HCT116 (cell line): ENCODE measurements at regions of chr1 and their contacts with region 1.

Region 1: GRCh38 chr1:203702130-203702577 is 62.8 kb upstream of the LAX1 start:
- DNase-seq: peak; percentile 35
- ATAC-seq: peak; percentile 82
- H3K4me3 ChIP-seq: no peak overlapping the region
- H3K27ac ChIP-seq: no peak overlapping the region
- H3K4me1 ChIP-seq: peaks cover 0 to 19% of the 10 kb centered on the region in 2 experiments; a peak in 1 of 4 replicates
- H3K27me3 ChIP-seq: no peaks in the 10 kb centered on the region
- CTCF ChIP-seq: peak; percentile 75 to 98 (median 91)
- POLR2A ChIP-seq: no peak
- RAD21 ChIP-seq: peak; percentile 98

Region 2: GRCh38 chr1:203340112-203340804 is 361.9 kb before region 1 on chr1:
- CTCF ChIA-PET with region 1: interaction called, 9 read pairs
- POLR2A ChIA-PET with region 1: no interaction called
- RAD21 ChIA-PET with region 1: no interaction called
- intact Hi-C with region 1: loop called (anchors 2 kb)
- DNase-seq: peak; percentile 76
- ATAC-seq: peak; percentile 76
- H3K4me3 ChIP-seq: no peak overlapping the region
- H3K27ac ChIP-seq: no peak overlapping the region
- H3K4me1 ChIP-seq: peaks cover 0 to 6% of the 10 kb centered on the region in 2 experiments; a peak in 2 of 4 replicates
- H3K27me3 ChIP-seq: peaks cover 15% of the 10 kb centered on the region; the same call in 1 of the 2 replicates
- CTCF ChIP-seq: peak; percentile 88 to 96 (median 94)
- POLR2A ChIP-seq: no peak
- RAD21 ChIP-seq: peak; percentile 95

Region 3: GRCh38 chr1:203504397-203505250 is 197.5 kb before region 1 on chr1:
- CTCF ChIA-PET with region 1: interaction called, 73 read pairs
- POLR2A ChIA-PET with region 1: interaction called, 6 read pairs
- RAD21 ChIA-PET with region 1: interaction called, 7 to 8 read pairs
- intact Hi-C with region 1: loop called (anchors 1 kb)
- DNase-seq: peak; percentile 70
- ATAC-seq: peak; percentile 98
- H3K4me3 ChIP-seq: no peak overlapping the region
- H3K27ac ChIP-seq: no peak overlapping the region
- H3K4me1 ChIP-seq: peaks cover 0 to 7% of the 10 kb centered on the region in 2 experiments; a peak in 1 of 4 replicates
- H3K27me3 ChIP-seq: peaks cover 13% of the 10 kb centered on the region; the same call in 1 of the 2 replicates
- CTCF ChIP-seq: peak; percentile 70 to 85 (median 83)
- POLR2A ChIP-seq: no peak
- RAD21 ChIP-seq: peak; percentile 86

Region 4: DNA sequence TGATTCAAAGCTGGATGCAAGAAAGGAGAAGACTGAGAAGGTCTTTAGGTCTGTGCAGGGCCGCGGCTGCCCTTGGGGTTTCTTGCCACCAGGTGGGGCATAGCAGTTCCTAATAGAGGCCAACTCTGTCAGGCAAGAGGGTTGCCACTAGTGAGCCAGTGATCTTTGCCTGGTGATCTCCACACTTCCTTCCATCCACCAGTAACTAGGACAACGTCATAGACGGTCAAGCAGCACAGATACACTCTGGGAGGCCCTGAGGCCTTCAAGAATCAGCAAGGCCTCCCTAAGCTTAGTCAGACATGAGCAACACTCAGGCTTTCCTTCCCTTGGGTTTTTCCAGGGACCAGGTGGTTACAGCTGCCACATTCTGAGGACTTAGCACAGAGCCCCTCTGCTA is 108.4 kb before region 1 on chr1:
- CTCF ChIA-PET with region 1: no interaction called
- POLR2A ChIA-PET with region 1: no interaction called
- RAD21 ChIA-PET with region 1: interaction called in 1 of 2 experiments, 6 read pairs
- intact Hi-C with region 1: loop called (anchors 2 kb)
- DNase-seq: peak; percentile 23
- ATAC-seq: peak; percentile 91
- H3K4me3 ChIP-seq: no peak overlapping the region
- H3K27ac ChIP-seq: no peak overlapping the region
- H3K4me1 ChIP-seq: peaks cover 0 to 6% of the 10 kb centered on the region in 2 experiments; a peak in 1 of 4 replicates
- H3K27me3 ChIP-seq: peaks cover 4% of the 10 kb centered on the region; the same call in 1 of the 2 replicates
- CTCF ChIP-seq: peak; percentile 23 to 66 (median 59); a peak in 5 of 6 replicates
- POLR2A ChIP-seq: no peak
- RAD21 ChIP-seq: peak; percentile 57

Region 5: DNA sequence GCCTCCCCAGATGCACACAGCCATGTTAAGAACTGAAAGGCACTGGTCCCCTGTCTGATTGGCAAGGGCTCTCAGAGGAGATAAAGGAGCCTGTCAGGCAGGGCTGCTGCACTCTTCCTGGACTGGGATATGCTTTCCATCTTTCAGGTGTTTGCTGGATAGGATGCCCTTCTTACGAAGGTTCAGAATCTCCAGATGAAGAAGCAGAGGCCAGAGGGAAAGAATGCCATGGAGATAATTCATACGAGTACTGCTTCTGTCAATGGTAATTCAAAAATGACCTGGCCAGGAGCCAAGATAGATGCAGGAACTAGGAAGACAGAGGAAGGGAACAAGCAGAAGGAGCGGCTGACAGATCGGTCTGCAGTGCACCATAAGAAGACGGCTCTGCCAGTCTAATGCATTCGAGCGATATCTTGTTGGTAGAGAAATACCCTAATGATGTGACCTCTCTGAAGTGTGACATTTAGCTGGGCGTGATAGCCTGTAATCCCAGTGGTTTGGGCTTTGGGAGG is 92.1 kb before region 1 on chr1:
- CTCF ChIA-PET with region 1: no interaction called
- POLR2A ChIA-PET with region 1: no interaction called
- RAD21 ChIA-PET with region 1: no interaction called
- intact Hi-C with region 1: loop called (anchors 5 kb)
- DNase-seq: no peak
- ATAC-seq: no peak
- H3K4me3 ChIP-seq: no peak overlapping the region
- H3K27ac ChIP-seq: no peak overlapping the region
- H3K4me1 ChIP-seq: peaks cover 4 to 10% of the 10 kb centered on the region in 2 experiments; a peak in 3 of 4 replicates
- H3K27me3 ChIP-seq: no peaks in the 10 kb centered on the region
- CTCF ChIP-seq: no peak; a peak in 1 of 6 replicates
- POLR2A ChIP-seq: no peak
- RAD21 ChIP-seq: no peak

Region 6: DNA sequence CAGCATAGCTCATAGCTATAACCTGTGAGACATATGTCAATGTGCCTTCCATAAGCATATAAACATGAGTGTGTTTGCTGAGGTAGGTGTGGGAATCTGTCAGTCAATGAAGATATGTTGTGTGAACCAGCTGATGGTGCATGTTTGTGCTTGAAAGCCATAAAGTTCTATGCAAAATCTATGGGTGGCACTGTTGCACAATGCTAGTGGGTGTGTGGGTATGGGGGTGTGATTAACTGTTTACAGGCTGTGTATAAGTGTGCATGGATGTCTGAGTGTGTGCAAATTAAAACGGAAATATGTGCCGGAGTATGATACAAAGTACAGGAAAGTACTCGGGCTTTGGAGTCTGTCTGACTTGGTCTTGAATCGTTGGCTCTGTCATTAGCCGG is 76.5 kb before region 1 on chr1:
- CTCF ChIA-PET with region 1: interaction called, 7 read pairs
- POLR2A ChIA-PET with region 1: no interaction called
- RAD21 ChIA-PET with region 1: interaction called, 4 to 16 read pairs
- intact Hi-C with region 1: no loop called
- DNase-seq: no peak
- ATAC-seq: peak; percentile 41
- H3K4me3 ChIP-seq: peak overlapping the region in 1 of 2 experiments; percentile 64; a peak in 2 of 4 replicates
- H3K27ac ChIP-seq: no peak overlapping the region
- H3K4me1 ChIP-seq: peaks cover 5 to 33% of the 10 kb centered on the region in 2 experiments; a peak in 3 of 4 replicates
- H3K27me3 ChIP-seq: no peaks in the 10 kb centered on the region
- CTCF ChIP-seq: peak in 2 of 3 experiments; percentile 37 to 61; a peak in 4 of 6 replicates
- POLR2A ChIP-seq: no peak
- RAD21 ChIP-seq: peak; percentile 88

Region 7: DNA sequence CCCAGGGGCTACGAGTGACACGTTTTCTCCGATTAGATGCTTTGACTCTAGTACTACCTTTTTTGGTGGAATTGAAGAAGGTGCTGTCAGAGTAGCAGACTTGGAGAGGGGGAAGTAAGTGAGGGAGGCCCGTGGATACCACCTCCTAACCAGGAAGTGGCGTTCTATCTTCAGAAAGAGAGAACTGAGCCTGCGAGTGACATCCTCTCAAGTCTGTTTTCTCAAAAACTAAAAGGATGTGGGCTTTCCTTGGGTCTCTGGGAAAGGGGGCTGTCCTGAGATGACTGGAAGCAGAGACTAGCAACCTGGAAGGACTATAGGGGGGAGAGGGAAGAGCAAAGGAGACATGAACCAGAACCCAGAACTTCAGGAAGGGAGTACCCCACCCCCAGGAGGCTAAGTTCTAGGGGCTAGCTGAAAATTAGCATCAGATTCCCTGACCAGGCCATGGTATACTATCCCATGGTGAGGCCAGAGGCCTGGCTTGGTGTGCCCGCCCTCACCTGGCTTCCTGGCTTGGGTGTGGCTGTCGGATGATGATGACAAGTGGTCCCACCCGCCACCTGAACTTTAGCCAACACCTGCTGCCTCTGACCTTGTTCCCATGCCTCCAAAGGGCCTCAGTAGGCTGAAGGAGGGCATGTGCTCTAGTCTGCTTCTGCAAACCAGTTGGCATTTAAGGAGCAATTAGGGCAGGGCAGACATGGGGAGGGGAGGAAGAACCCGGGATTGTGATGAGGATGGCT is 26.4 kb before region 1 on chr1:
- CTCF ChIA-PET with region 1: interaction called, 4 read pairs
- POLR2A ChIA-PET with region 1: no interaction called
- RAD21 ChIA-PET with region 1: no interaction called
- intact Hi-C with region 1: loop called (anchors 1 kb)
- DNase-seq: no peak
- ATAC-seq: no peak
- H3K4me3 ChIP-seq: no peak overlapping the region; a peak in 1 of 4 replicates
- H3K27ac ChIP-seq: no peak overlapping the region
- H3K4me1 ChIP-seq: peaks cover 25 to 51% of the 10 kb centered on the region in 2 experiments
- H3K27me3 ChIP-seq: no peaks in the 10 kb centered on the region
- CTCF ChIP-seq: no peak
- POLR2A ChIP-seq: no peak
- RAD21 ChIP-seq: no peak